Natural killer cell (primary cell): ENCODE measurements at regions of chr1 and their contacts with region 1.

Region 1: DNA sequence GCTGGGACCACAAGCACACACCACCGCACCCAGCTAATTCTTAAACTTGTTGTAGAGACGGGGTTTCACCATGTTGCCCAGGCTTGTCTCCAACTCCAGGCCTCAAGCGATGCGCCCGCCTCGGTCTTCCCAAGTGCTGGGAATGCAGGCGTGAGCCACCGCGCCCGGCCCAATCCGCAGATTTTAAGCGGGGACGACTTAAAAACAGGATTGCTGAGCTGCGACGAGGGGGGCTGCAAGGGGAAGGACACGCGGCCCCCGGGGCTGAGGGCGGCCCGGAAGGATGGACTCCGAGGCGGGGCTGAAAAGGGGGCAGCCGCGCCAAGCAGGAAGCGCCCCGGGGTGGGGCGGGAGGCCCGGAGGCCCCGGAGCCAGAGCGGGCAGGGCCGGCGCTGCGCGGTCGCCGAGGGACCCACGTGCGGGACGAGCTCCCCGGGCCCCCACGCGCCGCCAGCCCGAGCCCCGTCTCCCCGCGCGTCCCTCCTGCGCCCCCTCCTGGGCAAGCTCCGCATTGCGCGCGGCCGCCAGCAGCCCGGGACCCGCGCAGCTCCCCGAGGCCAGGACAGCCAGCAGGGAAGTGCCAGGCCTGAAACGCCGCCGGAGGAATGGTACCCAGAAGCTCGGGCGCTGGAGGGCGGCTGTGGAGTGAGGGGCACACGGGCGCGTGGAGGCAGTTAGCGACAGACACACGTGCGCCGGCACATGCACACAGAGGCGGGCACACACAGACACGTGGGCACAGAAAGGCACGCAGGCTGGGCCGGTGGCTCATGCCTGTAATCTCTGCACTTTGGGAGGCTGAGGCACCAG is 5.5 kb upstream of the PRKCZ start:
- DNase-seq: peak; percentile 85 to 86
- ATAC-seq: peak; percentile 86 to 95 (median 91)
- H3K4me3 ChIP-seq: no peak overlapping the region
- H3K4me3 Mint-ChIP-seq: peak overlapping the region; percentile 47
- H3K27ac ChIP-seq: no peak overlapping the region
- H3K27ac Mint-ChIP-seq: no peak overlapping the region
- H3K4me1 ChIP-seq: peaks cover 22% of the 10 kb centered on the region
- H3K4me1 Mint-ChIP-seq: peaks cover 18 to 26% of the 10 kb centered on the region in 2 donors
- H3K27me3 ChIP-seq: peaks cover 17% of the 10 kb centered on the region
- H3K27me3 Mint-ChIP-seq: peaks cover 5 to 25% of the 10 kb centered on the region in 2 donors
- CTCF ChIP-seq: peak; percentile 87

Region 2: DNA sequence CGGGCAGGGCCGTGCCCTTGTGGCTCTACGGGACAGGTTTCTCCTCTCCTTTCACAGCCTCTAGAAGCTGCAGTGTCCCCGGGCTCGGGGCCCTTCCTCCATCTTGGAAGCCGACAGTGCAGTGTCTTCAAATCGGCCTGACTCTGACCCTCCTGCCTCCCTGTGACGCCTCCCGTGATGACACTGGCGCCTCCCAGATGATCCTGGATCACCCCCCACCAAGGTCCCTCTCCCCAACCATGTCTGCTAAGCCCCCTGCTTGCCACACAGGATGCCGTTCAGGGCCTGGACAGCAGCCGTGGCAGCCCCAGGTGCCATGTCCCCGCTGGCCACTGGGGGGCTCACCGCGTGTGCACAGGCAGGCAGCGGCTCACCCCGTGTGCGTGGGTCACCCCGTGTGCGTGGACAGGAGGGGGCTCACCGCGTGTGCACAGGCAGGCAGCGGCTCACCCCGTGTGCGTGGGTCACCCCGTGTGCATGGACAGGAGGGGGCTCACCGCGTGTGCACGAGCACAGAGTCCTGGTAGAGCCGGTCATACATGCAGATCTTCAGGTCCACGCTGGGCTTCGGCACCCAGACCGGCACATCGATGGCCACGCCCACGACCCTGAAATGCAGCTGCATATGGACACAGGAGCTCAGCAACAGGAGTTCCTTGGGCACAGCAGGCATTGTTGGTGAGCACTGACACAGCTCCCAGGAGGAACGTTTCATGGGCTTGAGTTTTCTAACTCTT is 100.7 kb before region 1 on chr1:
- intact Hi-C with region 1: loop called (anchors 5 kb)
- DNase-seq: peak; percentile 54 to 76
- ATAC-seq: peak; percentile 71 to 99 (median 96)
- H3K4me3 ChIP-seq: no peak overlapping the region
- H3K4me3 Mint-ChIP-seq: no peak overlapping the region
- H3K27ac ChIP-seq: no peak overlapping the region
- H3K27ac Mint-ChIP-seq: no peak overlapping the region
- H3K4me1 ChIP-seq: peaks cover 10% of the 10 kb centered on the region
- H3K4me1 Mint-ChIP-seq: peaks cover 0 to 8% of the 10 kb centered on the region in 2 donors
- H3K27me3 ChIP-seq: peaks cover 2% of the 10 kb centered on the region
- H3K27me3 Mint-ChIP-seq: no peaks in the 10 kb centered on the region
- CTCF ChIP-seq: peak; percentile 85

Region 3: GRCh38 chr1:2031546-2032540 is 12.9 kb before region 1 on chr1:
- intact Hi-C with region 1: no loop called
- DNase-seq: no peak
- ATAC-seq: no peak
- H3K4me3 ChIP-seq: no peak overlapping the region
- H3K4me3 Mint-ChIP-seq: no peak overlapping the region
- H3K27ac ChIP-seq: no peak overlapping the region
- H3K27ac Mint-ChIP-seq: no peak overlapping the region
- H3K4me1 ChIP-seq: no peaks in the 10 kb centered on the region
- H3K4me1 Mint-ChIP-seq: no peaks in the 10 kb centered on the region
- H3K27me3 ChIP-seq: no peaks in the 10 kb centered on the region
- H3K27me3 Mint-ChIP-seq: peaks cover 0 to 3% of the 10 kb centered on the region in 2 donors
- CTCF ChIP-seq: no peak